K562 (cell line): ENCODE measurements at regions of chr7 and their contacts with region 1.

Region 1: GRCh38 chr7:110587304-110587703 is 503.6 kb upstream of the LRRN3 start:
- DNase-seq: no peak
- ATAC-seq: no peak
- H3K4me3 ChIP-seq: no peak overlapping the region
- H3K27ac ChIP-seq: no peak overlapping the region
- H3K4me1 ChIP-seq: no peaks in the 10 kb centered on the region
- H3K27me3 ChIP-seq: no peaks in the 10 kb centered on the region
- CTCF ChIP-seq: no peak
- EP300 ChIP-seq: no peak
- POLR2A ChIP-seq: no peak
- RAD21 ChIP-seq: no peak

Region 2: GRCh38 chr7:110534241-110534931 is 52.9 kb before region 1 on chr7:
- CTCF ChIA-PET with region 1: no interaction called
- POLR2A ChIA-PET with region 1: no interaction called
- in situ Hi-C with region 1: no loop called
- intact Hi-C with region 1: loop called (anchors 5 kb)
- DNase-seq: peak in 1 of 4 experiments; percentile 15
- ATAC-seq: peak; percentile 64
- H3K4me3 ChIP-seq: no peak overlapping the region
- H3K27ac ChIP-seq: no peak overlapping the region
- H3K4me1 ChIP-seq: no peaks in the 10 kb centered on the region
- H3K27me3 ChIP-seq: no peaks in the 10 kb centered on the region
- CTCF ChIP-seq: no peak
- EP300 ChIP-seq: no peak
- POLR2A ChIP-seq: no peak
- RAD21 ChIP-seq: no peak